ENCODE measurements at regions of chr14 and their contacts with region 1.

Region 1: DNA sequence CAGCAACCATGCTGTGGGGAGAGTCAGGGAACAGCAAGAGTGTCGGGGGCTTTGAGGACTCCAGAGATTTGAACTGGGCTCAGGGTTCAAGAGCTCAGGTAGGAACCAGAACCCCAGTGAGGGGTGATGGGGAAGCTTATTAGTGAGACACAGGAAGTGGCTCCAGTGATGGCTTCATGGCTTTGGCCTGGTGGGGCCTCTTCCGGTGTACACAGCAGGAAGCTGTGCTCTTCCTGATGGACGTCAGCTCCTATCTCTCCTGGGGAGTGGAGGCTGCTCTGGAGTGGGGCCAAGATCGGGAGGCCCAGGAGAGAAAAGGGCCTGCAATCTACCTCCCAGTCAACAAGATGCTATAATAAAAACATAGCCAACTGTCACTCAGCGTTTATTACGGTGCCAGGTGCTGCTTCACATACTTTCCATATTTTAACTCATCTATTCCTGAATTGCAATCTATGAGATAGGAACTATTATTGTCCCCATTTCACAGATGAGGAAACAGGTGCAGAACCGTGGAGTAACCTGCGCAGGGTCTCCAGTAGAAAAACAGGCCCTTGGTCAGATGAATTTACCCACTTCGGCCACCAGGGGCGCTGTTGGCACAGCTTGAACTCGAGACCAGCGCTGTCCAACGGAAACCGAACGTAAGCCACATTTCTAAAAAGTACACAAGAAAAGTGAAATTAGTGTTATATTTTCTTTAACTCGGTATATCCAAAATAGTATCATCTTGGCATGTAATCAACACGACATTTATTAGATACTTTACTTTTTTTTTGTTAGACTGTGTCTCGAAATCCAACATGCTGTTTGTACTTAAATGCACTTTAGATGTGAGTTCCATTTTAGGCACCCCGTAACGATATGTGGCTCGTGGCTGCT is 63.6 kb upstream of the DLK1 start:
- DNase-seq: peak; percentile 84
- H3K4me3 ChIP-seq: no peak overlapping the region
- H3K27ac ChIP-seq: peak overlapping the region; percentile 15 to 72
- H3K4me1 ChIP-seq: peaks cover 50% of the 10 kb centered on the region
- H3K27me3 ChIP-seq: no peaks in the 10 kb centered on the region
- CTCF ChIP-seq: peak; percentile 93 to 100 (median 97)
- POLR2A ChIP-seq: no peak

Region 2: DNA sequence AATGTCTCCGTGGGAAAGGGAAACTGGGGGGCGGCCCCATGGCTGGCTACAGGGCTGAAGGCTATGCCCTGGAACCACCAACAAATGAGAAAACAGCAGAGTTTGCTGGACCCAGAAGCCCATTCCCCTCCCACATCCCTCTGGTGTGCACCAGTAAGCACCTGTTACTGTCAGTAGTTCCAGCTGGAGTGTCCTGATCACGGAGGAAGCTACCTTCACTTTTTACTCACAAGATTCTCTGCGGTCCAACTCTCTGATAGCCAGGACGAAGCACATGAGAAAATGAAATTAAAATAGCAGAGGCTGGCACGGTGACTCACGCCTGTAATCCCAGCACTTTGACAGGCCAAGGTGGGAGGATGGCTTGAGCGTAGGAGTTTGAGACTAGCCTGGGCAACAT is 140.1 kb after region 1 on chr14:
- intact Hi-C with region 1: no loop called
- DNase-seq: no peak
- H3K4me3 ChIP-seq: no peak overlapping the region
- H3K27ac ChIP-seq: no peak overlapping the region
- H3K4me1 ChIP-seq: no peaks in the 10 kb centered on the region
- H3K27me3 ChIP-seq: no peaks in the 10 kb centered on the region
- CTCF ChIP-seq: no peak
- POLR2A ChIP-seq: no peak

Region 3: DNA sequence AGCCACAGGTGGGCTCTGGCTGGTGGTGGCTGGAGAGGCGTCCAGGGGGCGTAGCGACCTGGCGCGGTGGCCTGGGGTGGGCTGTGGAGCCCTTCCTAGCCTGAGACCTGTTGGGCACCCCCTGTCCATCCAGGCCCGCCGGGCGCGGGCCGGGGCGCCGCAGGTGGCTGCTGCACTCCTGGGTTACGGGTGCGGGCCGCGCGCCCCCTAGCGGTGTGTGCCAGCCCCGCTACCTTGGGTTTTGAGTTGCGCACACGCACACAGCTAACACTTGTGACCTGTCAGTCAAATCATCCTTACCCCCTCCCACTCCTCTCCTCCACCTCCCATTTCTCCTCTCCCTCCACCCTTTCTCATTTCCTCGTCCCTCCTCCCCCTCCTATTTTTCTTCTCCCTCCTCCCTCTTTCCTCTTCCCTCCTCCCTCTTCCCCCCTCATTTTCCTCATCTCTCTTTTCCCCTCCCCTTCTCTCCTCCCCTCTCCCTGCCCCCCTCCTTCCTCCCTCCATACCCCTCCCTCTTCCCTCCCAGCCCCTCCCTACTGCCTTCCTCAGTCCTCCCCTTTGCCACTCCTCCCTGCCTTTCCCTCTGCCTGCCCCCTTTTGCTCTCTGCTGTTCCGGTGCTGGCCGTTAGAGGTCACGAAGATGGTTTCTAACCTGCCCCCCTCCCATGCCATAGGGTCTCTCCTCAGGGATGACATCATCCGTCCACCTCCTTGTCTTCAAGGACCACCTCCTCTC is 165.1 kb after region 1 on chr14:
- intact Hi-C with region 1: loop called (anchors 10 kb)
- DNase-seq: peak; percentile 74
- H3K4me3 ChIP-seq: peak overlapping the region; percentile 44 to 63
- H3K27ac ChIP-seq: no peak overlapping the region
- H3K4me1 ChIP-seq: no peaks in the 10 kb centered on the region
- H3K27me3 ChIP-seq: no peaks in the 10 kb centered on the region
- CTCF ChIP-seq: peak; percentile 7 to 60 (median 56)
- POLR2A ChIP-seq: no peak

Measured in testis (tissue), 5 donors.